Activated naive CD4-positive, alpha-beta T cell treated with anti-CD3 and anti-CD28 coated beads for 36 hours (primary cell): ENCODE measurements at regions of chr16 and their contacts with region 1.

Region 1: GRCh38 chr16:11224096-11224893 is 31.7 kb downstream of the SOCS1 start:
- DNase-seq: peak; percentile 86
- H3K4me3 Mint-ChIP-seq: peak overlapping the region; percentile 35
- H3K27ac Mint-ChIP-seq: peak overlapping the region; percentile 96
- H3K4me1 Mint-ChIP-seq: peaks cover 51% of the 10 kb centered on the region
- H3K27me3 Mint-ChIP-seq: no peaks in the 10 kb centered on the region

Region 2: GRCh38 chr16:11105038-11105903 is 119.0 kb before region 1 on chr16:
- CTCF ChIA-PET with region 1: no interaction called
- intact Hi-C with region 1: loop called (anchors 1 kb)
- DNase-seq: peak; percentile 74
- H3K4me3 Mint-ChIP-seq: no peak overlapping the region
- H3K27ac Mint-ChIP-seq: peak overlapping the region; percentile 84
- H3K4me1 Mint-ChIP-seq: peaks cover 41% of the 10 kb centered on the region
- H3K27me3 Mint-ChIP-seq: no peaks in the 10 kb centered on the region

Region 3: DNA sequence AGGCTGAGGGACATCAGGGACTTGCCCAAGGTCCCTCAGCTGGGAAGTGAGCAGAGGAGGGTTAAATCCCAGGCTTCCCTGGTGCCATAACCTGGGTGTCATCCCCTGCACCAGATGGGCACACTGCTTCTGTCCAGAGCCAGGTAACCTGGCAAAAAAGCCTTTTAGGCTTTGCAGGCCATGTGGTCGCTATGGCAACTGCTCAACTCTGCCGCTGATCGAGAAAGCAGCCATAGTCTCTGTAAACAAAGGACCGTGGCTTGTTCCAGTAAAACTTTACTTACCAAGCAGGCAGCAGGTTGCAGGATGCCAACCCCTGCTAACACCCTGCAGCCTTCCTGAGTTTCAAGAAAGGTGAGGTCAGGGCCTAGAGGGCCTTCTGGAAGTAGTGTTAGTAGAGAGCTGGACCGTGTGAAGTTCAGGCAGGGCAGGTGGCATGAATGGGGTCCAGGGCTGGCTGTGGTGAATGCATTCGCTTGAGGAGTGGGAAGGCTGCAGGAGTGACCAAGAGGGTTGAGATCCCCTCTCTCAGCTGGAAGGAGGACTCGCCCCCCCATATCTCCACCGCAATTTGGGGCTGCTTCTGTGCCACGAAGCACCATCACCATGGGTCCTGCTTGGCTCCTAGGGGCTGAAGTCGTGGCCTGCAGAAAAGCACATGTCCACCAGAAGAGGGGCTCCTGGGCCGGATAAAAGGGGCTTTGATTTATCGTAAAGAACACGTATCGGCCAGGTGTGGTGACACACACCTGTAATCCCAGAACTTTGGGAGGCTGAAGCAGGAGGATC is 59.6 kb before region 1 on chr16:
- CTCF ChIA-PET with region 1: no interaction called
- intact Hi-C with region 1: no loop called
- DNase-seq: no peak
- H3K4me3 Mint-ChIP-seq: no peak overlapping the region
- H3K27ac Mint-ChIP-seq: no peak overlapping the region
- H3K4me1 Mint-ChIP-seq: peaks cover 9% of the 10 kb centered on the region
- H3K27me3 Mint-ChIP-seq: no peaks in the 10 kb centered on the region

Region 4: GRCh38 chr16:11205754-11206581 is 18.3 kb before region 1 on chr16:
- CTCF ChIA-PET with region 1: interaction called, 15 read pairs
- intact Hi-C with region 1: loop called (anchors 1 kb)
- DNase-seq: peak; percentile 56
- H3K4me3 Mint-ChIP-seq: no peak overlapping the region
- H3K27ac Mint-ChIP-seq: peak overlapping the region; percentile 87
- H3K4me1 Mint-ChIP-seq: peaks cover 28% of the 10 kb centered on the region
- H3K27me3 Mint-ChIP-seq: no peaks in the 10 kb centered on the region

Region 5: DNA sequence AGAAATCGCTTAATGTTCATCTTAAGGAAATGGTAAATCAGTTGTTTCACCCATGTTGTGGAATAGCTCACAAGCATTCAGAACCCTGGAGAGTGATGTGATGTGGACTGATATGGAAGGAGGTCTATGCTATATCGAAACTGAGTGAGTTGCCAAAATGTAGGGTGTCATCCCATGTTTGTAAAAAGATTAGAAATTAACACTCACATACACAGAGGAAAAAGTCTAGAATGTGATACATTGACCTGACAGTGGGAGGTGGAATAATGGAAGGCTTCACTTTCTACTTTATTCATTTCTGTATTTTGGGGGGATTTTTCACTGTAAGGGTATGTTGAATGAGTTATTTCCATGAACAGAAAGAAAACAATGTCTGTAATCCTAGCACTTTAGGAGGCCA is 61.5 kb after region 1 on chr16:
- CTCF ChIA-PET with region 1: no interaction called
- intact Hi-C with region 1: loop called (anchors 1 kb)
- DNase-seq: no peak
- H3K4me3 Mint-ChIP-seq: no peak overlapping the region
- H3K27ac Mint-ChIP-seq: peak overlapping the region; percentile 67
- H3K4me1 Mint-ChIP-seq: peaks cover 25% of the 10 kb centered on the region
- H3K27me3 Mint-ChIP-seq: no peaks in the 10 kb centered on the region